ENCODE measurements at regions of chr3 and their contacts with region 1.

Region 1: DNA sequence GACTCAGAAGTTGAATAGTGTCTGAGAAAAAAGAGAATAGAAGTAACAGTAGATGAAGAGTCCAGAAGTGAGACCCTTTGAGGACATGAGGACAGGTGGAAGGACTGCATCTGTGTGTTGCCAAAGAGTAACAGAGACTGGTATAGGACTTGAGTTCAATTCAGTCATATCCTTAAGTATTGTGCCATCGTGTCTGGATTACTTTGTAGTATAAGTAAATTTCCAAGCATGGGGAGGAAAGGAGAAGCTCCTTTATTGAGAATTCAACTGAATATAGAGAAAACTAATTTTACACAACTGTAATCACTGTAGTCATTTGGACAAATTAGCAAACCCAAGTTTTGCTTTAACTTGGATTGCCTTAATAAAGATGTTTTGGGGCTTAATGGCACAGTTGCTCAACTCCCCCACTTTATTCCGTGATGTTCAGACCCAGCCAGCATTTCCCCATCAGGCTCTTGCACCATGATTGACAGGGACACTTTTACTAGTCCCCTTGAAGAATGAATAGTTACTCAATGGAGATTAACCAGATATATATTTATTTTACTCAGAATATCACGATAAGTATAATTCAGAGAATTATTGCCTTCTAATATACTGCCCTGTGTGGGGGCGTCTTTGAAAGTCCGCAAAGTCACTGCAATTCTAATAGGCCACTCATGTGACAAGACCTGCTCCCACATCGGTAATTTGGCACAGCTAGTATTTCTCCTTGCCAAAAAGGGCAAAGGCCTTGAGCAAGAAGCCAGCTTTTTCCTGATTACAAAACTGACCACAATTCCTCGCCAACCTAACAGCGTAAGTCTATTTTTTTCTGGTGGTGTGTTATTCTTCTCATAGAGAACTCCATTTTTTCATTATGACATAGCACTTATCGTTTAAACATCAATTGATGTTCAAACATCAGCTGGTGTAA is 61.3 kb downstream of the PPARG start:
- DNase-seq: peak; percentile 18
- H3K4me3 Mint-ChIP-seq: no peak overlapping the region
- H3K27ac Mint-ChIP-seq: no peak overlapping the region
- H3K4me1 Mint-ChIP-seq: peaks cover 44% of the 10 kb centered on the region
- H3K27me3 Mint-ChIP-seq: no peaks in the 10 kb centered on the region
- CTCF ChIP-seq: no peak

Region 2: GRCh38 chr3:12316776-12317243 is 33.3 kb before region 1 on chr3:
- CTCF ChIA-PET with region 1: no interaction called
- intact Hi-C with region 1: loop called (anchors 5 kb)
- DNase-seq: no peak
- H3K4me3 Mint-ChIP-seq: peak overlapping the region; percentile 26
- H3K27ac Mint-ChIP-seq: peak overlapping the region; percentile 11
- H3K4me1 Mint-ChIP-seq: peaks cover 21% of the 10 kb centered on the region
- H3K27me3 Mint-ChIP-seq: no peaks in the 10 kb centered on the region
- CTCF ChIP-seq: no peak